ENCODE measurements at regions of chr2 and their contacts with region 1.

Region 1: GRCh38 chr2:237190966-237191713 is 105.5 kb downstream of the COPS8 start:
- DNase-seq: no peak
- H3K4me3 ChIP-seq: no peak overlapping the region
- H3K27ac ChIP-seq: no peak overlapping the region
- H3K4me1 ChIP-seq: peaks cover 0 to 3% (median 0%) of the 10 kb centered on the region in 4 experiments; a peak in 1 of 7 replicates
- H3K27me3 ChIP-seq: no peaks in the 10 kb centered on the region
- CTCF ChIP-seq: no peak
- EP300 ChIP-seq: no peak
- POLR2A ChIP-seq: no peak
- RAD21 ChIP-seq: no peak

Region 2: DNA sequence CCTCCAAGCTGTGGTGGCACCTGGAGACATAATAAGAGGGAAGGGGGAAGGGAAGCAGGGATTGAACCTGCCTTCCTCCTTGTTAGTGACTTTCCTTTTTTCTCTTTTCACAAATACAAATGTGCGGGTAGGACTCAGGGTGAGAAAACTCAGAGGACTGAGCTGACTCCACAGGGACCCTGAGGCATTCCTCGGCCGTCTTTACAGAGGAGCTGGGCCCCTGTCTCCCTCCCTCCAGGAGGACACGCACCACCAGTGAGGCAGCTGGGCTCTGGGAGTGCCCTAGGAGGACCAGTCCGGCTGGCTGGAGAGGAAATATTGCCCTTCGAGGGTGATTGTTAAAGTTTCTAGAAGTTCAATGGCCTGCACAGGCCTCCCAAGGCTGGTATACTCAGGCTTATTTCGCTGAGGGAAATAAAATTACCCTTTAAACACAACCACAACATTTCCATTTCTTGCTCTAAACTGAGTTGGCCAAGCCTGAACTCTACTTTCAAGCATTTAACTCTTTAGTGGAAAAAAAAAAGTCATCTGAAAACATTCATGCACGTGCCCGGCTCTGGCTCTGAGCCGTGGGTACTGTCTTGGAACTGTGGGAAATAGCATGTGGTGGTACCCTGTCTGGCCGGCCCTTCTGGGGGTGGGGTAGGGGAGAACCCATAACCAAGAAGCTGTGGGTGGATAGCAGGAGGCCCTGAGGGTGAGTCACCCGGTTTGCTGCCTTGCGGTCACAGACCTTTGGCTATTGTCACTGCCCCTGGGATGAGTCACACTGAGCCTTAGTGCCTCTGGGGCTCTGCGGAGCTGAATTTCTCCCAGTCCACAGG is 10.5 kb after region 1 on chr2:
- CTCF ChIA-PET with region 1: interaction called, 16 read pairs
- POLR2A ChIA-PET with region 1: no interaction called
- DNase-seq: no peak
- H3K4me3 ChIP-seq: no peak overlapping the region
- H3K27ac ChIP-seq: no peak overlapping the region
- H3K4me1 ChIP-seq: peaks cover 6 to 26% (median 19%) of the 10 kb centered on the region in 4 experiments
- H3K27me3 ChIP-seq: no peaks in the 10 kb centered on the region; a peak in 3 of 7 replicates
- CTCF ChIP-seq: no peak
- EP300 ChIP-seq: no peak
- POLR2A ChIP-seq: no peak
- RAD21 ChIP-seq: no peak

Measured in H1 (cell line).